Endothelial cell of umbilical vein (primary cell): ENCODE measurements at regions of chr4 and their contacts with region 1.

Region 1: DNA sequence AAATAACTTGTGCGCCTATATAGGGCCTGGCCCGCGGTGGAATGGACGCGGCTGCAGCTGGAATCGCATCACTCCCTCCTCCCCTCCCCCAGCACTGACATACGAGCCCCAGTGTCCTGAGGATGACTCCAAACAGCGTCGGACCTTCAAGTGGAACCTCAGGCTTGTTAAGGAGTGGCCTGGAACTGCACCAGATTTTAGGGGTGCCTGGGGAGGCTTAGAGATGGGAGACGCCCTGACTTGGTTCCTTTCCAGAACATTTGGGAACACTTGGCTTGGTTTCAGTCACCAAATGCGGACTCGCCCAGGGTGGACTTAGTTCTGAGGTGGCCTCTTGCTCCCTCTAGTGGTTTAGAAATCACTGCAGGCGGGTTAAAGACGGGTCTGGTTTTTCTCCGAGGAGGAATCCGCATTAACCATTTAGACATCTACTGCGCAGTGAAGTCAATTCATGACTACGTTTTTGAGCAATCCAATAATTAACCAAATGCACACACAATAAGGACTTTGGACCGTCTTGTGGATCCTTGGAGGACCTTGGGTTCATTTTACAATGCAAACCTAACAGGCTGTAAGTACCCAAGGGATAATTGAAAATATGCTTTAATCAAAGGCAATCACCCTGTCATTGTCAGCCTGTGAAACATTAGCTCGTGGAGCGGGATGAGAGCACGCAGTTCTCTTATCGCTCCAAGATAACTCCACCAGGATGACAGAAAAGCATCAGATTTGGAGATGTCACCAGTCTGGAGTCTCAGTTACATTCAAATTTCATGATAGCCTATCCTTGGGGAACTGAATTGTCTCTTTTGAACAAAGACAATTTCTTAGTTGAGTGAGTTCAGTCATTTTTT is 11.2 kb upstream of the PDGFRA start:
- DNase-seq: peak; percentile 84
- H3K4me3 ChIP-seq: peak overlapping the region; percentile 34 to 78 (median 58)
- H3K27ac ChIP-seq: peak overlapping the region; percentile 30
- H3K4me1 ChIP-seq: peaks cover 2% of the 10 kb centered on the region
- H3K27me3 ChIP-seq: peaks cover 2 to 7% of the 10 kb centered on the region in 2 experiments
- CTCF ChIP-seq: peak; percentile 82 to 84
- POLR2A ChIP-seq: no peak

Region 2: DNA sequence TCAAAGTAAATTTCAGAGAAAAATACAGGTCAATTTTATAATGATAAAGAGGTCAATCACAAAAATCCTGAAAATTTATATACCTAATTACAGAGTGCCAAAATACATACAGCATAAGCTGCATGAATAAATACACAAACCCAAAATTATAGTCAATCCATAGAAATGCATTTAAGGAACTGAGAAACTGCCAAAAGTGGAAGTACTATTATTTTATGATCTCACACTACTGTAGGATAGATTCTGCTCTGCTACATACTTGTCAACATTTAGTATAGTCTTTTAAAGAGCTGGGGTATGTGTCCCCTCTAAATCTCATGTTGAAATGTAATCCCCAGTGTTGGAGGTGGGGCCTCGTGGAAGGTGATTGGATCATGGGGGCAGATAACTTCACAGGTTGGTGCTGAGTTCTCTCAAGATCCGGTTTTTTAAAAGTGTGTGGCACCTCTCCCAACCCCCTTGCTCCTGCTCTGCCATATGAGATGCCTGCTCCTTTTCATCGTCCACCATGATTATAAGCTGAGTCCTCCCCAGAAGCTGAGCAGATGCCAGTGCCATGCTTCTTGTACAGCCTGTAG is 185.2 kb before region 1 on chr4:
- CTCF ChIA-PET with region 1: no interaction called
- POLR2A ChIA-PET with region 1: no interaction called
- dilution Hi-C with region 1: no loop called
- intact Hi-C with region 1: loop called (anchors 5 kb)
- DNase-seq: no peak
- H3K4me3 ChIP-seq: no peak overlapping the region
- H3K27ac ChIP-seq: no peak overlapping the region
- H3K4me1 ChIP-seq: peaks cover under 1% of the 10 kb centered on the region
- H3K27me3 ChIP-seq: no peaks in the 10 kb centered on the region
- CTCF ChIP-seq: no peak
- POLR2A ChIP-seq: no peak

Region 3: GRCh38 chr4:54165438-54165837 is 52.4 kb before region 1 on chr4:
- CTCF ChIA-PET with region 1: no interaction called
- POLR2A ChIA-PET with region 1: no interaction called
- dilution Hi-C with region 1: no loop called
- intact Hi-C with region 1: no loop called
- DNase-seq: no peak
- H3K4me3 ChIP-seq: no peak overlapping the region
- H3K27ac ChIP-seq: no peak overlapping the region
- H3K4me1 ChIP-seq: no peaks in the 10 kb centered on the region
- H3K27me3 ChIP-seq: no peaks in the 10 kb centered on the region
- CTCF ChIP-seq: no peak
- POLR2A ChIP-seq: no peak